Caco-2 (cell line): ENCODE measurements at regions of chr22 and their contacts with region 1.

Region 1: GRCh38 chr22:40645579-40646197 is 9.2 kb upstream of the MRTFA start:
- DNase-seq: no peak
- H3K4me3 ChIP-seq: no peak overlapping the region
- H3K4me3 Mint-ChIP-seq: no peak overlapping the region
- H3K27ac Mint-ChIP-seq: no peak overlapping the region
- H3K4me1 ChIP-seq: peaks cover 23% of the 10 kb centered on the region
- H3K4me1 Mint-ChIP-seq: peaks cover 21% of the 10 kb centered on the region
- H3K27me3 ChIP-seq: no peaks in the 10 kb centered on the region
- H3K27me3 Mint-ChIP-seq: no peaks in the 10 kb centered on the region
- CTCF ChIP-seq: no peak

Region 2: DNA sequence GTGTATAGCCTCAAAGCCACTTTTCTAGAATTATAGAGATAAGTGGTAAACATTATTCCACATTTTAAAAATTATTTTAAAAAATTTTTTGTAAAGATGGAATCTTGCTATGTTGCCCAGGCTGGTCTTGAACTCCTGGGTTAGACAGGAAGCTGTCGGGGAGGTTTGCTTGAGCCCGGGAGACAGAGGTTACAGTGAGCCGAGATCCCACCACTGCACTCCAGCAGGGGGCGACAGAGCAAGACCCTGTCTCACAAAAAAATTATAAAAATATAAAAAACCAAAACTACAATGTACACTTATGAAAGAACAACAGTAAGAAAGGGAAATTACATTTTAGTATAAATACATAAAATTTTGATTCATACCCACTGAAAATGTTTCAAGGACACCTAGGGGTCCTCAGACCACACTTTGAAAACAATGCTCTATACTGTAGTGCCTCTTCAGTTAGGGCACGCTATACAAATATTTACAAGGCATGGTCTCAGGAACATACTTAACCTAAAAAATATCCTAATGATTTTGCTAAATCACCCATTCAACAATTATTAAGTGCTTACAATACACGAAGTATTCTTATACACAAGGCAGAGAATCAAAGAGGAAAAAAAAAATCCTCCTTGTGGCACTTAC is 120.3 kb before region 1 on chr22:
- CTCF ChIA-PET with region 1: interaction called, 8 read pairs
- POLR2A ChIA-PET with region 1: interaction called, 7 read pairs
- intact Hi-C with region 1: loop called (anchors 1 kb)
- DNase-seq: peak in 1 of 2 experiments; percentile 68
- H3K4me3 ChIP-seq: no peak overlapping the region
- H3K4me3 Mint-ChIP-seq: no peak overlapping the region
- H3K27ac Mint-ChIP-seq: no peak overlapping the region
- H3K4me1 ChIP-seq: no peaks in the 10 kb centered on the region
- H3K4me1 Mint-ChIP-seq: no peaks in the 10 kb centered on the region
- H3K27me3 ChIP-seq: no peaks in the 10 kb centered on the region
- H3K27me3 Mint-ChIP-seq: no peaks in the 10 kb centered on the region
- CTCF ChIP-seq: peak; percentile 62 to 68